ENCODE measurements at regions of chr22 and their contacts with region 1.

Region 1: GRCh38 chr22:33851240-33851639 is 69.0 kb downstream of the LARGE1 start:
- DNase-seq: no peak
- ATAC-seq: peak; percentile 6; the same call in 1 of the 2 replicates
- H3K4me3 Mint-ChIP-seq: peak overlapping the region; percentile 54
- H3K27ac Mint-ChIP-seq: peak overlapping the region; percentile 96
- H3K4me1 Mint-ChIP-seq: peaks cover 84% of the 10 kb centered on the region
- H3K27me3 Mint-ChIP-seq: no peaks in the 10 kb centered on the region
- CTCF ChIP-seq: no peak

Region 2: DNA sequence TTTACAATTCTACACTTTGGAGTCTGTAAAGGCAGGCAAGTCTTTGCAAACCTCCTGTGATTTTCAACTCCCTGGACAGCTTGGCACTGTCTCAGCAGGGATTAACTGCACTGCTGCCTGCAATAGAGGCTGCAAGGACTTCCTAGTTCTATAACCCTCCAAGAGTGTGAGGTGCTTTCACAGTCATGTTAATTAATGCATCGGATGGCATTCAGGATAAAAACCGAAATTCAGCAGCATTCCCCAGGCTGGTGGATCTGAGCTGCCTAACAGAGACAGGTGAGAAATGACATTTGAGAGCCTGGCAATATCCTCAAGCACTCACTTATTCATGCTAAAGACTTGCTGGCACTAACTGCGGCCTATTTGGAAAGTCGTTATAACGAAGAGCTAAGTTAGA is 16.0 kb before region 1 on chr22:
- CTCF ChIA-PET with region 1: interaction called, 13 read pairs
- POLR2A ChIA-PET with region 1: interaction called, 3 read pairs
- DNase-seq: no peak
- ATAC-seq: peak; percentile 80
- H3K4me3 Mint-ChIP-seq: peak overlapping the region; percentile 20; the same call in 1 of the 2 replicates
- H3K27ac Mint-ChIP-seq: peak overlapping the region; percentile 82
- H3K4me1 Mint-ChIP-seq: peaks cover 93% of the 10 kb centered on the region
- H3K27me3 Mint-ChIP-seq: no peaks in the 10 kb centered on the region
- CTCF ChIP-seq: no peak